ENCODE measurements at regions of chr2 and their contacts with region 1.

Region 1: DNA sequence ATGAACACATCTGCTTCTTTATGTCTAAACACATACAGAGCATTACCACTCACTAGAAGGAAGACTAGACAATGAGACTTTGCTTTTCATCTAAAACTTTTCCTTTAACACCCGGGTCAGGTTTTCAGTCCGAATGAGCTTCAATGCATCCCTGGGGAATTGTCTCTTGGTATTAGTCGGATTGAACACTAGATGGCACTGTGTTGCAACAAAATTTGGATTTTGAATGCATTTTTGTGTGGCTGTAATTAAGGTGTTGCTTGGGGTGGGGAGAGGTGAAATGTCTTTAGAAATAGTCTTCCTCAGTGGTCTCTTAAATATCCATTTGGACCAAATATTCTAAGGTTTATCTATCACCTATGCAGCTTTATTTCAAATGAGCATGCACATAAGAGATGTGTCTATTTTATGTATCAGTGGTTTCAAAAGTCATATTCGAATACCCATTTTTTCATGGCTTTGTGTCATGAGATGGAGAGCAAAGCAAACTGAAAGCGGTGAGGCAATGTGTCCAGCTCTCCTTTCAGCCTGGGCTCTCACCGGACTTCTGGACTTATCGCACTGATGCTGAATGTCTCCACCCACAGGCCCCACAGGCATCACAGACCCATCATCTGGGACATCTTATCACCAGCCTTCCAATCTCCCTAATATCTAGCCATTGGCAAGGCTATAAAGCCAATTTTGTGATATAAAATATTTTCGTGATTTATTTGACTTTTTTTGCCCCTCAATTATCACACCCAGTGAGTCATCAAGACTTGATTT is 510.3 kb downstream of the RNF144A start:
- DNase-seq: no peak
- ATAC-seq: peak in 2 of 4 donors; percentile 36 to 67
- H3K4me3 ChIP-seq: no peak overlapping the region
- H3K27ac ChIP-seq: no peak overlapping the region
- H3K4me1 ChIP-seq: no peaks in the 10 kb centered on the region
- H3K27me3 ChIP-seq: peaks cover 0 to 44% (median 8%) of the 10 kb centered on the region in 3 donors
- CTCF ChIP-seq: peak; percentile 66

Region 2: DNA sequence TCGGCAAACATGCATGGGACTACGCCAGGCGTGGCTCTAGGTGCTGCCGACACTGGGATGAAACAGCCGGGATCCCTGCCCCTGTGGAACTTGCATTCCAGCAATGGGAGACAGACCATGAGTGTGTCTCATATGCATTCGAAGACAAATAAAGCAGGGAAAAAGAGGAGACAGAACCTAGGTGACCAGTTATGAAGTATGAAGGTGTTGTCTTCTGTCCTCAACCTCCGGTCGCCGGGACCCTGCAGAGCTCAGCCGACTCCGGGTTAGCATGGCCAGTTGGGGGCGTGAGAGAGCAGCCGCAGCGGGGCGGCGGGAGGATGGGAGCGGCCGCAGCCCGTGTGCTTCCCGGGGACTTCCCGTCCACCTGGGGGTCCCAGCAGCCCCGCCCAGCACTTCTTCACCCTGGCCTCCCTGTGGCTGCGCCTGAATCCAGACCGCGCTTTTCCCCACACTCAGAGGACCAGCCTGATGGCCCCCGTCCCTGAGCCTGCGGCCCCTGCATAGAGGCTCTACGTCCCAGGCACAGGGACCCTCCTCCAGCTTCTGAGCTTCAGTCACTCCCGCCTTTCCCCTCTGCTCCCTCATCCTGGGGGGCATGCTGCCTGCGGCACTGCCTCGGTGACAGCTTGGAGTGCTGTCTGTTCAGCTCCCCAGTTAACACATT is 1265.8 kb after region 1 on chr2:
- intact Hi-C with region 1: loop called in 1 of 2 experiments (anchors 2 kb)
- DNase-seq: peak in 1 of 2 donors; percentile 38
- ATAC-seq: peak in 2 of 4 donors; percentile 54 to 69
- H3K4me3 ChIP-seq: no peak overlapping the region
- H3K27ac ChIP-seq: no peak overlapping the region
- H3K4me1 ChIP-seq: no peaks in the 10 kb centered on the region
- H3K27me3 ChIP-seq: peaks cover 0 to 18% (median 2%) of the 10 kb centered on the region in 3 donors
- CTCF ChIP-seq: peak; percentile 44